Ascending aorta (tissue), 2 donors: ENCODE measurements at regions of chr17 and their contacts with region 1.

Region 1: GRCh38 chr17:30378824-30379302 is at the start of gene CPD:
- DNase-seq: peak; percentile 84 to 99
- H3K4me3 ChIP-seq: peak within 1 kb of the TSS; percentile 81 to 90
- H3K27ac ChIP-seq: peak within 1 kb of the TSS; percentile 82 to 86
- H3K4me1 ChIP-seq: peaks cover 0 to 4% of the 10 kb centered on the region in 2 donors
- H3K27me3 ChIP-seq: no peaks in the 10 kb centered on the region
- CTCF ChIP-seq: peak in 1 of 3 experiments; percentile 8
- total RNA-seq, gene CPD: 141 TPM

Region 2: DNA sequence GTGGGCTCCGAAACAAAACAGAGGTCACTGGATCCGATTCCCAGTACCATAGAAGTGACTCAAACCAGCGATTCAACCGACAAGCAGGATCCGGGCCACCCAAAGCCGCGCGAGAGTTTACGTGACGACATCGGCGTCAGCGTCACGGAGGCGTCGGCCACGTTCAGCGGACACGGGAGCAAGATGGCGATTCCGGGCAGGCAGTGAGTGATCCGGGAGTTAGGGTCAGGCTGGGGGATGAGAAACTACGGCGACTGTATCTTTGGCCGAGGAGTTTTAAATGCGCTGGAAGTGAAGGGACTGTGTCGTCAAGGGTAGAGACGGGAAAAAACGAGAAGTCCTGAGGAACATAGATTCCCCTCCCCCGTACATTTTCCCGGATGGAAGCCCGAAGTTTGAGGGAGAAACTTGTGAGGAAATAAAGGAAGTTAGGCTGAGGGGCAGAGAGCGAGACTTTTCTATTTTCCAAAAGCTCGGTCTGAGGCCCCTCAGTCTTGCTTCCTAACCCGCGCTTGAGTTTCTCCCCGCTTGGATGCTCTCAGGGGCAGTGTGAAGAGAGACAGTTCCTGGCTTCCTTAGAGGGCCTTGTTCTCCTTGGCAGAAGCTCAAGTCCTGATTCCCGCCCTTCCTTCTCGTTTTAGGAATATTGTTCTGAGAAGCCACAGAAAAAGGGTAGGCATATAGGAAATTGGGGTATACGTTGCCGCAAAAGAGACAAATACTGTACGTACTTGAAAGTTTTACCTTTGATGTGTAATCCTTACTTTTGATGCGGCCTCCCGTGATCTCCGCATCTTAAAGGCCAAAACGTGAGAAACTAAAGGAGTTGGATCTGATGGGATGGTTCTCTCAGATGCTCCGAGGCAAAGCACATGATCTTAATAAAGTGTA is 262.0 kb before region 1 on chr17 and contains the start of gene NSRP1:
- intact Hi-C with region 1: loop called (anchors 5 kb)
- DNase-seq: peak; percentile 82 to 98
- H3K4me3 ChIP-seq: peak within 1 kb of the TSS; percentile 65 to 71
- H3K27ac ChIP-seq: peak within 1 kb of the TSS; percentile 92 to 95
- H3K4me1 ChIP-seq: peaks cover 0 to 12% of the 10 kb centered on the region in 2 donors
- H3K27me3 ChIP-seq: no peaks in the 10 kb centered on the region
- CTCF ChIP-seq: no peak
- total RNA-seq, gene NSRP1: 5.1 TPM

Region 3: DNA sequence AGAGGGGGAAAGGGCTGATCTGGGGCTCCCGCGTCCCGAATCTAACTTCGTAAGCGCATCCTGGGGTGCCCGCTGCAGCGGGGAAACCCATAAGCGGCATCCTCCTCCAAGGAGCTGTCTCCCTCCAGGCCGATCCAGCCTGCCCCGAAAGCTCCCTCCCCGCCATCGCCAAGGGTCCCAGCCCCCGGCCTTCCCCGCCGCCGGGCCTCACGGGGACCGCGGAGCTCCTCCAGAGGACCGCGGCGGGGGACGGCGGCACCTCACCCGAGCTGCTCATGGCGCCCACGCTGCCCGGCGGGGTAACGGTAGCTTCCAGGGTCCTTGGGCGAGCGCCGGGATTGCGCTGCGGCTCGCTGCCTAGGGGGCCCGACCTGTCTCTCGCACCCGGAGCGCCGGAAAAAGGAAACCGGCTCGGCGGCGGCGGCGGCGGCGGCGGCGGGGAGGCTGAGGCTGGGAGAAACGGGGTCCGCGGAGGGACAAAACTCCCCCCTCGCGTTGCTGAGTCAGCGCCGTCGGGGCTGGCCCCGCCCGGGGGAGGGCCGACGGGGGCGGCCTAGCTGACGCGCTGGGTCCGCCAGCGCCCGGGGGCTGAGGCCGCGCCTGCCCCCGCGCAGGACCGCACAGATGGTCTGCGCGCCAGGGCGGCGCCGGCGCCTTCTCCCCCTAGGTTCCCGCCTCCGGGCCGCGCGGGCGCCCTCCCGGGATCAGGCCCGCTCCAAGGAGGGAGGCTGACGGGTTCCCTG is 87.1 kb before region 1 on chr17 and contains the start of gene BLMH:
- intact Hi-C with region 1: loop called (anchors 1 kb)
- DNase-seq: peak in 1 of 2 donors; percentile 89
- H3K4me3 ChIP-seq: peak within 1 kb of the TSS; percentile 86
- H3K27ac ChIP-seq: peak within 1 kb of the TSS; percentile 91 to 96
- H3K4me1 ChIP-seq: peaks cover 2 to 19% of the 10 kb centered on the region in 2 donors
- H3K27me3 ChIP-seq: no peaks in the 10 kb centered on the region
- CTCF ChIP-seq: no peak
- total RNA-seq, gene BLMH: 6.9 TPM

Region 4: GRCh38 chr17:30344283-30345088 is 34.4 kb before region 1 on chr17:
- intact Hi-C with region 1: loop called (anchors 2 kb)
- DNase-seq: no peak
- H3K4me3 ChIP-seq: no peak overlapping the region
- H3K27ac ChIP-seq: peak overlapping the region; percentile 28 to 38
- H3K4me1 ChIP-seq: peaks cover 0 to 4% of the 10 kb centered on the region in 2 donors
- H3K27me3 ChIP-seq: no peaks in the 10 kb centered on the region
- CTCF ChIP-seq: no peak

Region 5: GRCh38 chr17:30363715-30364202 is 15.1 kb before region 1 on chr17:
- intact Hi-C with region 1: no loop called
- DNase-seq: no peak
- H3K4me3 ChIP-seq: no peak overlapping the region
- H3K27ac ChIP-seq: no peak overlapping the region
- H3K4me1 ChIP-seq: no peaks in the 10 kb centered on the region
- H3K27me3 ChIP-seq: no peaks in the 10 kb centered on the region
- CTCF ChIP-seq: no peak

Region 6: GRCh38 chr17:30433514-30433913 is 54.7 kb after region 1 on chr17:
- intact Hi-C with region 1: loop called (anchors 5 kb)
- DNase-seq: no peak
- H3K4me3 ChIP-seq: no peak overlapping the region
- H3K27ac ChIP-seq: no peak overlapping the region
- H3K4me1 ChIP-seq: peaks cover 3 to 13% of the 10 kb centered on the region in 2 donors
- H3K27me3 ChIP-seq: no peaks in the 10 kb centered on the region
- CTCF ChIP-seq: no peak

Region 7: GRCh38 chr17:30477083-30477773 is 98.4 kb after region 1 on chr17 and contains the start of gene GOSR1:
- intact Hi-C with region 1: loop called (anchors 2 kb)
- DNase-seq: peak; percentile 68 to 96
- H3K4me3 ChIP-seq: peak within 1 kb of the TSS; percentile 78 to 92
- H3K27ac ChIP-seq: peak within 1 kb of the TSS; percentile 94 to 95
- H3K4me1 ChIP-seq: peaks cover 4 to 8% of the 10 kb centered on the region in 2 donors
- H3K27me3 ChIP-seq: no peaks in the 10 kb centered on the region
- CTCF ChIP-seq: peak; percentile 66 to 84 (median 72)
- total RNA-seq, gene GOSR1: 33.0 TPM

Region 8: DNA sequence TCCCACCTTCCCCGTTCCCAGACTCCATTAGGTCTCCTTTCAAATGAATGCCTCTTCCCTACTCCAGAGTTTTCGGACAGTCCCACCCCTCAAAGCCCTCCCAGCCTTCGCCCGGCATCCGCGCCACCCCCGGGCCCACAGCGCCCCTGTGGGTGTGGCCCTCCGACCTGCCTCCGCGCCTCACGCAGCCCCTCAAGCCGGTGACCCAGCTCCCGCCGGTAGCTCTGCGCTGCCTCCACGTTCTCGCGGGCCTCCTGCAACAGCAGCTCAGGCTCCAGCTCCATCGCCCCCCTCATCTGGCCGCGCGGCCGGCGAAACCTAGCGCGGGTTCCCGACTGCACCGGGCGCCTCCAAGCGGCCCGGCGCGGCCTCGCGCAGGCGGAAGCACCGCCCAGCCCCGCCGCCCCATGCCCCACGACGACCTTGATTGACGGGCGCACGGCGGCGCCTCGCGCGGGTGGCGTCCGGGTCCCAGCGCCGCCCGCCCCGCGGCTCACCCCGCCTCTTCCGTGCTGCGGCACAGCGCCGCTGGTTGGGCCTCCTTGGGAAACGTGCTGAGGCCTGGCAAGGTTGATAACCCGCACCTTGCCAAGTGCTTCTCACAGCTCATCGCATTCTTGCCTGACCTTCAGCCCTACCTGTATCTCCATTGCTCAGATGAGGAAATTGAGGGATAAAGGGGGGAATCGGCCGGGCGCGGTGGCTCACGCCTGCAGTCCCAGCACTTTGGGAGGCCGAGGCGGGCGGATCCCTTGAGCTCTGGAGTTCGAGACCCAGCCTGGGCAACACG is 445.7 kb after region 1 on chr17 and contains the start of gene CRLF3:
- intact Hi-C with region 1: loop called (anchors 2 kb)
- DNase-seq: peak; percentile 59 to 92
- H3K4me3 ChIP-seq: peak within 1 kb of the TSS; percentile 62 to 80
- H3K27ac ChIP-seq: peak within 1 kb of the TSS; percentile 61 to 63
- H3K4me1 ChIP-seq: peaks cover 0 to 17% of the 10 kb centered on the region in 2 donors
- H3K27me3 ChIP-seq: no peaks in the 10 kb centered on the region
- CTCF ChIP-seq: peak; percentile 46 to 67 (median 57)
- total RNA-seq, gene CRLF3: 10.0 TPM